GM10248 (cell line): ENCODE measurements at regions of chr10 and their contacts with region 1.

Region 1: DNA sequence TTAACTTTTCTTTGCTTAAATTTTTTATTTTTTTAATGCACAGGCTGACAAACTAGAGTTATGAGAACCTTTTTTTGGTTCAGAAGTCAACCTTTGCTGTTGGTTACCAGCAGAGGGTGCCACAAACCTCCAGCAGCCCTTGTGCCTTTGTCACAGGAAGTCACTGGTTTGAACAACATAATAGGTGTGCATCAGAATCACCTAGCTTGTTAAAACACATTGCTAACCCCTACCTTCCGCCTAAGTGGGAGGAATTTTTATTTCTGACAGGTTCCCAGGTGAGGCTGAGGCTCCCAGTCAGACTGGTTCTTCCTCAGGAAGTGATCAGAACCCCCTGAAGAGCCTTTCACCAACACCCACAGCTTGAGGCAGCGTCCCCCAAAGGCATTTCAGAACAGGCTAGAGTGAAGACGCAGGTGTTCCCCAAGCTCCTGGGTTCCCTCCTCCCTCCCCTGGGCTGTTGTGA is 22.6 kb upstream of the VDAC2 start:
- DNase-seq: peak; percentile 72
- CTCF ChIP-seq: peak; percentile 76

Region 2: DNA sequence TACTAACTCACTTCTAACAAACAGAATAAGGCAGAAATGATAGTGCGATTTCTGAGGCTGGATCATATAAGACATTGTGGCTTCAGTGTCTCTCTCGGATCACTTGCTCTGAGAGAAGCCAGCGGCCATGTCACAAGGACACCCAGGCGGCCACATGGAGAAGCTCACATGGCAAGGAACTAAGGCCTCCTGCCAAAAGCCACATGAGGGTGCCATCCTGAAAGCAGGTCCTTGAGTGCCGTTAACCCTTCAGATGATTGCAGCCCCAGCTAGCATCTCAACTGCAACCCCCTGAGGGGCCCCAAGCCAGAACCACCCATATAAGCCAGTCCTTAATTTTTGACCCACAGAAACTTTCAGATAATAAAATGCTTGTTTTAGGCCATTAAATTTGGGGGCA is 15.7 kb after region 1 on chr10:
- CTCF ChIA-PET with region 1: interaction called, 22 read pairs
- POLR2A ChIA-PET with region 1: interaction called, 3 read pairs
- DNase-seq: no peak
- CTCF ChIP-seq: no peak

Region 3: DNA sequence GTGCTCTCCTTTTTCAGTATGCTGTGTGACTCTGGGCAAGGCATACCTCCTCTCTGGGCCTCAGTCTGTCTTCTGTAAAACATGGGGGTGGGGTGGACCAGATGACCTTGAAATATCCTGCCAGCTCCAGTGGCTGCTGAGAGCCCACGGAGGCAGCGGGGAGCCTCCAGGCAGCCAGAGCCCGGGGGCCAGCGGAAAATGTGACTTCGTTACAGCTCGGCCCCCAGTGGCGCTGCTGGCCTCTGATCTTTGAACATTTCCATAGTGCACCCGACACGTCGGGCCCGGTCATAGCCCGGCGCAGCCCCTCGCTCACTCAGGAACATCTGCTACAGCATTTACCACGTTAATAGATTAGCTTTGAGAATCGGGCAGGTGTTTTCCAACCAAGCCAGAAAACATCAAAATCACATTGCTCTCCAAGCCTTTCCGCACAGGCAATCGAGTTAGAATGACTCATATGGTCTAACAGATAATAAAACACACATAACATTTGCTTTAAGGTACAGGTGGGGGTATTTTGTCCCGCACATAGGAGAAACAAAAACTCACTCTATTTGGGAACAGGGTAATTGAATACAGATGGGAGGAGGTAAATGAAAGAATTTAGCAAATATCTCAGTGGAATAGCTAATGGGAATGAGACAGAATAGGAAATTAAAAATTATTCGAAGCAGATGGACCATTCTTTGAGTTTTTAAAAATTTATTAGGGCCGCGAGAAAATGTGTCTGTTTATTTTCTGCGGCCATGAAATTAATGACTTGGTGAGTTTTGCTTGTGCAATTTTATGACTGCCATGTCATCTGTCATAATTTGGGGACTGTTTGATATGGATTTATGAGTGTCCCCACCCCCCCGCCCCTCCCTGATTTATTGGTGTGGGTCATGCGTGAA is 74.1 kb after region 1 on chr10:
- CTCF ChIA-PET with region 1: no interaction called
- POLR2A ChIA-PET with region 1: no interaction called
- DNase-seq: no peak
- CTCF ChIP-seq: no peak

Region 4: DNA sequence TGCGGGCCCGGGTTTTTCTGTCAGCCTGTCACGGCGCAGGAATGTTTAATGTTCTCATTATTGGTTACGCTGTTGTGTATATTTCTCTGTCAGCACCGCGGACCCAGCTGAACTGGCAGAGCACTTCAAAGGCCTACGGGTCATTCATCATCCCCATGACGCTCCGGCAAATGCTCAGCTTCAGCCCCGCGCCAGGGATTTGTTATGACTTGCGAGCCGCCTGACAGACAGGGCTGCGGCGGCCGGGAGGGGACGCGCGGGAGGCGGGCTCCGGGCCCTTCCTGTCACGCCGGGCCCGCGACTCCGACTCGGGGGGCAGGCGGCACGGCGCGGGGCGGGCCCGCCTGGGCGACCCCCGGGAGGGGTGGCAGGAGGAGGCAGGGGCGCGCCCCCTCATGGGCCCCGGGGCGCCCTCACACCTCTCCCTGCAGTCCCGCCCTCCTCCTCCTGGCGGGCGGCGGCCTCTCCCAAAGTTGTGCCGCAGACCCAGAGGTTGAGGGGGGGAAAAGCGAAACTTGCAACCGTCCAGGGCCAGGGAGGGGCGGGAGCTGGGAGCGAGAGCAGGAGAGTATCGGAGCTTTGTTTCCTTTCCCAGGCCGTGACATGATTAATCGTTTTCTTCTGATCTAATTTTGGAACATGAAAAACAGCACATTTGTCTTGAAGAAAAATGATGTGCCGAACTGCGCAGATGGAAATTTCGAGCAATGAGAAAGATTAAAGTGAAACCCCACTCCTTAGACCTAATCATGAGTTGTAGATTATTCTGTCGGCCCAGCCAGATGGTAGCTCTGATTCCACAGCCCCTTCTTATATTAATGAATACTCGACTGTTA is 107.1 kb after region 1 on chr10:
- CTCF ChIA-PET with region 1: no interaction called
- POLR2A ChIA-PET with region 1: no interaction called
- DNase-seq: peak; percentile 59
- CTCF ChIP-seq: no peak